ENCODE measurements at regions of chr18 and their contacts with region 1.

Region 1: GRCh38 chr18:73842795-73843394 is 304.7 kb downstream of the FBXO15 start:
- DNase-seq: peak in 1 of 2 donors; percentile 28
- H3K4me3 ChIP-seq: no peak overlapping the region
- CTCF ChIP-seq: no peak
- POLR2A ChIP-seq: no peak

Region 2: GRCh38 chr18:72768681-72769229 is 1074.1 kb before region 1 on chr18:
- intact Hi-C with region 1: loop called (anchors 5 kb)
- DNase-seq: no peak
- H3K4me3 ChIP-seq: no peak overlapping the region
- CTCF ChIP-seq: no peak
- POLR2A ChIP-seq: no peak

Region 3: DNA sequence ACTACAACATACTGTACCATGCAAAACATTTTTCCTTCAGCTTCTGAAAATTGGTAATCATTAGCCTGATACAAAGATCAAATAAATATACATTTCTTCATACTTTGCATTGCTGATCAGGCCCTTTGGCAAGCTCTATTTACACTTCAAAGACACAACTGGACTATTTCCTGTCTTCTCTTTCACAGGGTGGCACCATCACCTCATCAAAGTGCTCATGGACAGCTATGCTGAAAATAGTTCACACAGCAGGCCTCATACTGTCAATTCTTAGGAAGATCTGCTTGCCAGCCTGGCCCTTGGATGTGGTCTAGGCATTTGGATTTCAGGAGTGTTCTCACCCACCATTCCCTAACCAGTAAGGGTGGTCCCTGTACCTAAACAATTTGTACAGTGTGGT is 270.8 kb after region 1 on chr18:
- intact Hi-C with region 1: no loop called
- DNase-seq: no peak
- H3K4me3 ChIP-seq: no peak overlapping the region
- CTCF ChIP-seq: no peak
- POLR2A ChIP-seq: no peak

Measured in lower leg skin (tissue), 4 donors.